Sigmoid colon (tissue), 7 donors: ENCODE measurements at regions of chr13 and their contacts with region 1.

Region 1: GRCh38 chr13:29472332-29472961 is 123.0 kb downstream of the SLC7A1 start:
- DNase-seq: no peak
- H3K4me3 ChIP-seq: no peak overlapping the region
- H3K27ac ChIP-seq: no peak overlapping the region
- H3K4me1 ChIP-seq: no peaks in the 10 kb centered on the region
- H3K27me3 ChIP-seq: no peaks in the 10 kb centered on the region
- CTCF ChIP-seq: peak in 3 of 4 experiments; percentile 65 to 75 (median 71)
- EP300 ChIP-seq: no peak
- POLR2A ChIP-seq: no peak

Region 2: DNA sequence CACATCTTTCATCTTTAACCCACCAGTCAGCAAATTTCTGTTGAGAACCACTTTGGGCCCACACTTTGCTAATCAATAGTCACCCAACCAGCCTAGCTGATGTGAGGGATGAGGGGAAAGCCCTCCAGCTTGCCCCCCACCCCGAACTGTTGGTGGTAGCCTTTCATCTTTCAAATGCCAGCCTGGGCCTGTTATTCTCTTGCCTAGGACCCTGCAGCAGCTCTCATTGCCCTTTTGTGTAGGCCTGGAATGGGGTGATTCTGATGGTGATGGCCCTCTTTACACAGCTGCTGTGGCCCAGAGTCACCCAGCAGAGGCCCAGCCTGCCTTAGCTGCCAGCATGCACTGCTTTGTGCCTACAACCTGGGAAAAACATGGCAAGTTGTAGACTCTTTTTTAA is 171.4 kb before region 1 on chr13:
- intact Hi-C with region 1: no loop called
- DNase-seq: no peak
- H3K4me3 ChIP-seq: no peak overlapping the region
- H3K27ac ChIP-seq: no peak overlapping the region
- H3K4me1 ChIP-seq: no peaks in the 10 kb centered on the region
- H3K27me3 ChIP-seq: no peaks in the 10 kb centered on the region
- CTCF ChIP-seq: no peak
- EP300 ChIP-seq: no peak
- POLR2A ChIP-seq: no peak

Region 3: GRCh38 chr13:29428310-29429181 is 43.9 kb before region 1 on chr13:
- intact Hi-C with region 1: loop called (anchors 2 kb)
- DNase-seq: no peak
- H3K4me3 ChIP-seq: peak overlapping the region; percentile 23 to 56 (median 48)
- H3K27ac ChIP-seq: peak overlapping the region; percentile 60 to 84 (median 72)
- H3K4me1 ChIP-seq: peaks cover 0 to 33% (median 31%) of the 10 kb centered on the region in 4 donors
- H3K27me3 ChIP-seq: no peaks in the 10 kb centered on the region
- CTCF ChIP-seq: peak in 2 of 4 experiments; percentile 21 to 22
- EP300 ChIP-seq: no peak
- POLR2A ChIP-seq: no peak